Activated B cell treated with CpG ODN at 0.5 μM for 24 hours (primary cell): ENCODE measurements at regions of chr22 and their contacts with region 1.

Region 1: DNA sequence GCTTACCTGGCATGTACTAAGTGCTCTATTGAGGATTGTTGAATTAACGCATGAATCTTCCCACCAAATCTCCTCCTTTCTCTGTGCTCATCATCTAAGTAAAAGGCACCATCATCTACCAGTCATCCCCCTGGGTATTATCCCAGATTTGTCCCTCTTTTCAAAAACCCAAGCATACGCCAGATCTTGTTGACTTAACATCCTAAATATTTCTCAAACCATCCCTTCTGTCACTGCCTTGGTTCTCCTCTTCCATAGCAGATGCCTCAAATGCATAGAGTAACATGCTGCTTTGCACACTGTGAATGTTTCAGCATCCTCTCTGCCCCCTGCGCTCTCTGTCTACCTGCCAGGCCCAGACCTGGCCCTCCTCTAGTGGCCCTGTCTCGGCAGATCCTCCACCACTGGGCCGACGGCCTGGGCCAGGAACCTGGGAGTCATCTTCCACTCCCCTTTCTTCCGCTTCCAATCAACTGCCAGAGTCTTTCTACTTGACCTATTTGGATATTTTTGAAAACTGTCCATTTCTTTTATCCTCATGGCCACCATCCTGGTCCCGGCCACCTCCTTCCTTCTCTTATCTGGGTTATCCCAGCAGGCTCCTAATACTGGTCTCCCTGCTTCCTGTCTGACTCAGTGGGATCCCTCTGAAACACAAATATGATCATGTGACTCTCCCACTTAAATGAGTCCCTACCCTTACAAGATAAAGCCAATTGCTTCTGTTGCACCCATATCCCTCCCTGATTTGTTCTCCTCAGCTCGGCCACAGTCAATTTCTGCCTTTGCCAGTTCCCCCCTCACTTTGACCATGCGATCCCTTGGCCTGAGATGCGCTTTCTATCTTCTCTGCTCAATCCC is 3.4 kb upstream of the TAB1 start:
- DNase-seq: no peak
- ATAC-seq: no peak
- H3K4me3 Mint-ChIP-seq: no peak overlapping the region
- H3K27ac Mint-ChIP-seq: no peak overlapping the region
- H3K4me1 Mint-ChIP-seq: peaks cover 10% of the 10 kb centered on the region
- H3K27me3 Mint-ChIP-seq: no peaks in the 10 kb centered on the region
- CTCF ChIP-seq: no peak

Region 2: GRCh38 chr22:39170825-39171622 is 225.1 kb before region 1 on chr22:
- CTCF ChIA-PET with region 1: no interaction called
- POLR2A ChIA-PET with region 1: no interaction called
- intact Hi-C with region 1: no loop called
- DNase-seq: peak; percentile 85
- ATAC-seq: peak; percentile 83
- H3K4me3 Mint-ChIP-seq: peak overlapping the region; percentile 77
- H3K27ac Mint-ChIP-seq: peak overlapping the region; percentile 76
- H3K4me1 Mint-ChIP-seq: peaks cover 42% of the 10 kb centered on the region
- H3K27me3 Mint-ChIP-seq: no peaks in the 10 kb centered on the region
- CTCF ChIP-seq: peak; percentile 93

Region 3: GRCh38 chr22:39349506-39349966 is 46.6 kb before region 1 on chr22:
- CTCF ChIA-PET with region 1: interaction called, 7 read pairs
- POLR2A ChIA-PET with region 1: interaction called, 21 read pairs
- intact Hi-C with region 1: loop called (anchors 2 kb)
- DNase-seq: peak; percentile 47
- ATAC-seq: peak; percentile 9
- H3K4me3 Mint-ChIP-seq: peak overlapping the region; percentile 87
- H3K27ac Mint-ChIP-seq: peak overlapping the region; percentile 87
- H3K4me1 Mint-ChIP-seq: peaks cover 40% of the 10 kb centered on the region
- H3K27me3 Mint-ChIP-seq: peaks cover 2% of the 10 kb centered on the region
- CTCF ChIP-seq: no peak

Region 4: GRCh38 chr22:39462443-39463221 is 66.5 kb after region 1 on chr22:
- CTCF ChIA-PET with region 1: no interaction called
- POLR2A ChIA-PET with region 1: interaction called, 10 read pairs
- intact Hi-C with region 1: loop called (anchors 2 kb)
- DNase-seq: no peak
- ATAC-seq: peak; percentile 11
- H3K4me3 Mint-ChIP-seq: peak overlapping the region; percentile 32
- H3K27ac Mint-ChIP-seq: peak overlapping the region; percentile 70
- H3K4me1 Mint-ChIP-seq: peaks cover 86% of the 10 kb centered on the region
- H3K27me3 Mint-ChIP-seq: peaks cover 3% of the 10 kb centered on the region
- CTCF ChIP-seq: no peak

Region 5: GRCh38 chr22:39502109-39502788 is 106.1 kb after region 1 on chr22 and contains the start of gene MIEF1:
- CTCF ChIA-PET with region 1: interaction called, 9 read pairs
- POLR2A ChIA-PET with region 1: interaction called, 20 read pairs
- intact Hi-C with region 1: loop called (anchors 1 kb)
- DNase-seq: peak; percentile 89
- ATAC-seq: peak; percentile 96
- H3K4me3 Mint-ChIP-seq: peak within 1 kb of the TSS; percentile 95
- H3K27ac Mint-ChIP-seq: peak within 1 kb of the TSS; percentile 89
- H3K4me1 Mint-ChIP-seq: peaks cover 34% of the 10 kb centered on the region
- H3K27me3 Mint-ChIP-seq: no peaks in the 10 kb centered on the region
- CTCF ChIP-seq: no peak
- total RNA-seq, gene MIEF1: 38.2 and 41.3 TPM in 2 replicates

Region 6: GRCh38 chr22:39514373-39514973 is 118.3 kb after region 1 on chr22:
- CTCF ChIA-PET with region 1: interaction called, 21 read pairs
- POLR2A ChIA-PET with region 1: interaction called, 32 read pairs
- intact Hi-C with region 1: loop called (anchors 1 kb)
- DNase-seq: no peak
- ATAC-seq: peak; percentile 45
- H3K4me3 Mint-ChIP-seq: no peak overlapping the region
- H3K27ac Mint-ChIP-seq: peak overlapping the region; percentile 24
- H3K4me1 Mint-ChIP-seq: peaks cover 28% of the 10 kb centered on the region
- H3K27me3 Mint-ChIP-seq: no peaks in the 10 kb centered on the region
- CTCF ChIP-seq: no peak